WTC11 (cell line): ENCODE measurements at regions of chr14 and their contacts with region 1.

Region 1: GRCh38 chr14:73728717-73729330 is 14.6 kb upstream of the PNMA1 start:
- DNase-seq: peak; percentile 93
- ATAC-seq: peak; percentile 93
- H3K4me3 Mint-ChIP-seq: no peak overlapping the region
- H3K27ac Mint-ChIP-seq: peak overlapping the region; percentile 91
- H3K4me1 Mint-ChIP-seq: peaks cover 19% of the 10 kb centered on the region
- H3K27me3 Mint-ChIP-seq: no peaks in the 10 kb centered on the region
- CTCF ChIP-seq: peak; percentile 77

Region 2: DNA sequence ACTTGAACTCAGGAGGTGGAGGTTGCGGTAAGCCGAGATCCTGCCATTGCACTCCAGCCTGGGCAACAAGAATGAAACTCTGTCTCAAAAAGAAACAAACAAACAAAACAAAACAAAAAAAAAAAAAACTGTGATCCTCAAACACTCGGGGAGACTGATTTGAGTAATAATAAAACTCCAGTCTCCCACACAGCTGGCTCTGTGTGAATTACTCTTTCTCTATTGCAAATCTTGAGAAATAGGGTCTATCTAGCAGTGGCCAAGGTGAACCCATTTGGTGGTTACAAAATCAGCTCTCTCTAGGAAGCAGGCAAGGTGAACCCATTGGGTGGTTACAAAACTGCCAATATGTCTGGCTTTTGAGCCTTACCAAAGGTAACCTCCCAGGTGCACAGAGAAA is 122.6 kb before region 1 on chr14:
- CTCF ChIA-PET with region 1: no interaction called
- POLR2A ChIA-PET with region 1: no interaction called
- DNase-seq: no peak
- ATAC-seq: no peak
- H3K4me3 Mint-ChIP-seq: no peak overlapping the region
- H3K27ac Mint-ChIP-seq: no peak overlapping the region
- H3K4me1 Mint-ChIP-seq: no peaks in the 10 kb centered on the region
- H3K27me3 Mint-ChIP-seq: peaks cover 3% of the 10 kb centered on the region
- CTCF ChIP-seq: no peak

Region 3: GRCh38 chr14:73694083-73694482 is 34.7 kb before region 1 on chr14:
- CTCF ChIA-PET with region 1: no interaction called
- POLR2A ChIA-PET with region 1: no interaction called
- DNase-seq: no peak
- ATAC-seq: no peak
- H3K4me3 Mint-ChIP-seq: no peak overlapping the region
- H3K27ac Mint-ChIP-seq: no peak overlapping the region
- H3K4me1 Mint-ChIP-seq: no peaks in the 10 kb centered on the region
- H3K27me3 Mint-ChIP-seq: no peaks in the 10 kb centered on the region; the same call in 1 of the 2 replicates
- CTCF ChIP-seq: no peak

Region 4: DNA sequence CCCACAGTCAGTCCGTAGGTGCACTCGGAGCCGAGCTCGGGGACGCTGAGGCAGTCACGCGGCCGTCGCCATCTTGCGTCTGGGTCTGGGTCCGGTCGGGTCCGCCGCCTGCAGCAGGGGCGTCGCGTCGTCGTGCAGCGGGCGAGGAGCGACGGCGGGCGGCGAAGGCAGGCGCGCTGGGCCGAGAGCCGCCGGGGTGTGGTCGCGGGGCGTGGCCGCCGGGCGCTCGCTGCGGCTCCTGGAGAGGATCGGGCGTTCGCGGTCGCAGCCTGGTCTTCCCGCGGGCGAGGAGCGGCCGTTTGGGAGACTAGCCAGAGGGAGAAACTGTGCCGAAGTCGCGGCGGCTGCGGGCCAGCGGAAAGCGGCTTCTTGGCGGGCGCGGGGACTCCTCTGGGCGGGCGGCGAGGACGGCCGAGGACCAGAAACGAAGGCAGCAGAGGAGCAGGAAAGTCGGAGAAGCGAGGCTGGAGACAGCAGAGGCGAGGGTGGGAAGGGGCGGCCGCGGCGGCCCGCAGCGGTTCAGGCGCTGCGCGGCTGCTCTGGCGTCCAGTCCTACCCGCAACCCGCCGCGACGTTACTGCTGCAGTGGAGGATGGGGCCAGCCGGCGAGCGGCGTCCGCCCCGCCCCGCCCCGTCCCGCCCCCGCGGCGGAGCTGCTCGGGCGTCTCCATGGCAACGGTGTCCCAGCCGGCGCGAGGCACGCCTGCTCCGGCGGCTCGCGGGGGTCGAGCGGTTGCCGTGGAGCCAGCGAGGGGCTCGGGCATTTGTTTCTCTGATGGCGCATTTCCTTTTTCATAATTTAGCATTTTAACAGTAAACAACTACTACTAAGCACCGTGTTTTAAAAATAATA is 14.8 kb before region 1 on chr14 and contains the start of gene PNMA1:
- CTCF ChIA-PET with region 1: interaction called, 22 read pairs
- POLR2A ChIA-PET with region 1: no interaction called
- DNase-seq: peak; percentile 90
- ATAC-seq: peak; percentile 68
- H3K4me3 Mint-ChIP-seq: peak within 1 kb of the TSS; percentile 90
- H3K27ac Mint-ChIP-seq: peak within 1 kb of the TSS; percentile 97
- H3K4me1 Mint-ChIP-seq: peaks cover 36% of the 10 kb centered on the region
- H3K27me3 Mint-ChIP-seq: peaks cover 7% of the 10 kb centered on the region
- CTCF ChIP-seq: no peak
- total RNA-seq, gene PNMA1: 46.0 to 50.2 TPM (median 49.6 TPM) in 3 replicates

Region 5: GRCh38 chr14:73746520-73747378 is 17.9 kb after region 1 on chr14:
- CTCF ChIA-PET with region 1: interaction called, 74 read pairs
- POLR2A ChIA-PET with region 1: no interaction called
- DNase-seq: peak; percentile 22
- ATAC-seq: peak; percentile 31
- H3K4me3 Mint-ChIP-seq: no peak overlapping the region
- H3K27ac Mint-ChIP-seq: peak overlapping the region; percentile 88
- H3K4me1 Mint-ChIP-seq: peaks cover 68% of the 10 kb centered on the region
- H3K27me3 Mint-ChIP-seq: no peaks in the 10 kb centered on the region
- CTCF ChIP-seq: no peak

Region 6: GRCh38 chr14:73777401-73777800 is 48.6 kb after region 1 on chr14:
- CTCF ChIA-PET with region 1: interaction called, 51 read pairs
- POLR2A ChIA-PET with region 1: interaction called, 5 read pairs
- DNase-seq: no peak
- ATAC-seq: peak; percentile 85
- H3K4me3 Mint-ChIP-seq: no peak overlapping the region
- H3K27ac Mint-ChIP-seq: no peak overlapping the region
- H3K4me1 Mint-ChIP-seq: peaks cover 18% of the 10 kb centered on the region
- H3K27me3 Mint-ChIP-seq: peaks cover 19% of the 10 kb centered on the region
- CTCF ChIP-seq: no peak

Region 7: DNA sequence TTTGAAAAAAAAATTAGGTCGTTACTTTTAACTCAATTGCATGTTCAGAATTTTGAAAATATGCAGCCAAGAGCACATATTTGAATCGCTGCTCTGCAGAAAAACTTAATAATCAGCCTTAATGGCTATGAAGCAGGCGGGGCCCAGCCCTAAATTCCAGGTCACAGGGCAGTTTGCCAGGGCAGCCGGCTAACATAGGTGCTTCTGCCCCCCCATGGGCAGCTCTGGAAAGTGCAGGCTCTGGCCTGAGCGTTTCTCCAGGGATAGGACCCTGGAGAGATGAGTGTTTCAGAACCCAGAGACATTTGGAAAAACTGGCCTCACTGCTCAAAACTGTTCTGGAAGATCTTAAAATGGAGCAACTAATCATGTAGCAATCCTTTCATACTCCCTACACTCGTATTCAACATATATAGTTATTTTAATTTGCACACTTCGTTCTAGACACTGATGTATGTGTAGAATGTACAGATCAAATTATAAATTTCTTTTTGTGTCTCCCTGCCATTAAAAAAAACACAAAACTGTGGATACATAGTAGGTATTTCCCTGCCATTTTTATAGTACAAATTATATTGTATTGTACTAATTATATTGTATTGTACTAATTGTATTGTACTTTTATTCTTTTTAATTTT is 96.8 kb after region 1 on chr14:
- CTCF ChIA-PET with region 1: interaction called, 41 read pairs
- POLR2A ChIA-PET with region 1: interaction called, 4 read pairs
- DNase-seq: peak; percentile 82
- ATAC-seq: peak; percentile 99
- H3K4me3 Mint-ChIP-seq: no peak overlapping the region
- H3K27ac Mint-ChIP-seq: peak overlapping the region; percentile 5; the same call in 1 of the 2 replicates
- H3K4me1 Mint-ChIP-seq: no peaks in the 10 kb centered on the region
- H3K27me3 Mint-ChIP-seq: no peaks in the 10 kb centered on the region
- CTCF ChIP-seq: peak; percentile 43

Region 8: DNA sequence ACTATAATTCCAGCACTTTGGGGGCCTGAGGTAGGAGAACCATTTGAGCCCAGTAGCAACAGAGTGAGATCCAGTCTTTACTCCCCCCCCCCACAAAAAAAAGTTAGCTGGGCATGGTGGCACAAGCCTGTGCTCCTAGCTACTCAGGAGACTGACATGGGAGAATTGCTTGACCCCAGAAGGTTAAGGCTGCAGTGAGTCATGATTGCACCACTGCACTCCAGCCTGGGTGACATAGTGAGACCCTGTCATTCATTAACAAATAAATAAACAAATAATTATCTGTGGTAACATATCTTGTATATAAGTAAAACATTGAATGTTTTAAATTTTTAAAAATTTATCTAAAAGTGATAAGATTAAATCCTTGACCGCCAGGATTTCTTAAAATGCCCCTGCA is 285.5 kb after region 1 on chr14:
- CTCF ChIA-PET with region 1: no interaction called
- POLR2A ChIA-PET with region 1: no interaction called
- DNase-seq: no peak
- ATAC-seq: no peak
- H3K4me3 Mint-ChIP-seq: no peak overlapping the region
- H3K27ac Mint-ChIP-seq: no peak overlapping the region
- H3K4me1 Mint-ChIP-seq: peaks cover 3% of the 10 kb centered on the region
- H3K27me3 Mint-ChIP-seq: peaks cover 10% of the 10 kb centered on the region
- CTCF ChIP-seq: no peak